Pancreas (tissue), 10 donors: ENCODE measurements at regions of chr17 and their contacts with region 1.

Region 1: DNA sequence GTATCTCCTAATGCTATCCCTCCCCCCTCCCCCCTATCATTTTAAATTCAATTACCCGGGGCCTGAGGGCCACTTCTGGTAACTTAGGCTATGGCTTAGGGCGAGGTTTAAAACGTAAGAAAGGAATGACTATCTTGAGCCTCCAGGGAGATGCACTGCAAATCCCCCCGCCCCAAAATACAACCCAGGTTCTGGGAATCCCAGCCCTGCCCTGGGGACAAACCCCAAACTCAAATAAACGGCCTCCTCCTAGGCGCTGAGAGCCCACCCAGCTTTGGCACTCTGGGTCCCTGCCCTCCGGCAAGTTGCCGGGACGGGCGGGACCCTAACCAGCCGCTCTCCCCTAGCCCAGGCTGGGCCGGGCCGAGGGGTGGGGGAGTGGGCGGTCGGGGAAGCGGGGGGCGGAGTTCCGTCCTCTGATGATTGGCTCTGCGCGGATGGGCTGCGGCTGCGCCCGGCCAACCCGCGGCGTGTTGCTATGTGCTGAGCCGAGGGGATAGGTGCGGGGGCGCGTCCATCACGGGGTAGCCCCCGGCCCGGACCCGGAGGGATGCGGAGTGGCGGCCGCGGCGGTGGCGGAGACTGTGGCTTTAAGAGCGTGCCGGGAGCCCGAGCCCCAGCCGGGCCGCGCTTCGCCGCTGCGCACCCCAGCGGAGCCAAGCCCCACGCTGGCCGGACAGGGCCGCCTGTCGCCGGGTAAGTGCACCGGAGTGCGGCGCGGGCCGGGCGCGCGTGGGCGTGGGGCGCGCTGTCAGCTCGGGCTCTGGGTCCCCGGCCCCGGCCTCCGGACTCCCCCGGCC is at the start of gene YPEL2:
- DNase-seq: peak; percentile 96 to 98 (median 97)
- ATAC-seq: peak; percentile 82 to 89 (median 88)
- H3K4me3 ChIP-seq: peak within 1 kb of the TSS; percentile 80 to 98 (median 96)
- H3K27ac ChIP-seq: peak within 1 kb of the TSS; percentile 79 to 96 (median 92)
- H3K4me1 ChIP-seq: peaks cover 22 to 45% (median 27%) of the 10 kb centered on the region in 3 donors
- H3K27me3 ChIP-seq: no peaks in the 10 kb centered on the region
- CTCF ChIP-seq: no peak
- total RNA-seq, gene YPEL2: 9.1 to 28.7 (median 13.6) TPM

Region 2: DNA sequence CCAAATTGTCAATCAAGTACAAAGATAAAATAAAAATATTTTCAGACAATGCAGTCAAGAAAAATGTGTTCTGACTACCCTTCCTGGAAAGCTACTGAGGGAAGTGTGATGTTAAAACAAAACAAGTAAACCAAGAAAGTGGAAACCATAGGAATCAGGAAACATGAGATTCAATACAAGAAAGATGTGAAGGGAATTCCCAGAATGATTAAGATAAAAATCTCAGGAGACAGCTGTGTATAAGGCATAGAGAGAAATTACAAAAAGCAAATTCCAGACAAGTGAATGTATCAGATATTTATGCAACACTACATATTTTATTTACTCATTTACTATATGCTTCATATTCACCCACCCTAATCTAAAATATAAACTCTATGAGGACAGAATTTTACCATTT is 256.8 kb before region 1 on chr17:
- intact Hi-C with region 1: no loop called
- DNase-seq: no peak
- ATAC-seq: no peak
- H3K4me3 ChIP-seq: no peak overlapping the region
- H3K27ac ChIP-seq: no peak overlapping the region
- H3K4me1 ChIP-seq: no peaks in the 10 kb centered on the region
- H3K27me3 ChIP-seq: no peaks in the 10 kb centered on the region
- CTCF ChIP-seq: no peak

Region 3: DNA sequence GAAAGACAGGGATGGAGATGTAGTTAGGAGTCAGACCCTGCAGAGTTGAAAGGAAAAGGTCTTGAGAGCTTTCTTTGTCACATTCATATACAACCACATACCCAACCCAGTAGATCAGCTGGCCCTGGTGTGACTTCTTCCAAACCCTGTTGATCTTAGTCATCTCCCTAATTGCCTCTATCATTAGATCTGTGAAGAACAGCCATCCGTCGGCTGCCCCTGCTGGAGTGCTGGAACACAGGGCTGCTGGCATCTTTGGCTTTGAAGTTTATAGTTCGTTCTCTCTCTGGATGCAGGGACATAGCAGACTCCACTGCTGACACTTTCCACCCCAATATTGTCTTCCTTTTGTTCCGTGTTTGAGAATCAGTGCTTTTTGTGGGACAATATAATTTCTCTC is 131.9 kb before region 1 on chr17:
- intact Hi-C with region 1: no loop called
- DNase-seq: no peak
- ATAC-seq: no peak
- H3K4me3 ChIP-seq: no peak overlapping the region
- H3K27ac ChIP-seq: no peak overlapping the region
- H3K4me1 ChIP-seq: no peaks in the 10 kb centered on the region
- H3K27me3 ChIP-seq: no peaks in the 10 kb centered on the region
- CTCF ChIP-seq: no peak

Region 4: DNA sequence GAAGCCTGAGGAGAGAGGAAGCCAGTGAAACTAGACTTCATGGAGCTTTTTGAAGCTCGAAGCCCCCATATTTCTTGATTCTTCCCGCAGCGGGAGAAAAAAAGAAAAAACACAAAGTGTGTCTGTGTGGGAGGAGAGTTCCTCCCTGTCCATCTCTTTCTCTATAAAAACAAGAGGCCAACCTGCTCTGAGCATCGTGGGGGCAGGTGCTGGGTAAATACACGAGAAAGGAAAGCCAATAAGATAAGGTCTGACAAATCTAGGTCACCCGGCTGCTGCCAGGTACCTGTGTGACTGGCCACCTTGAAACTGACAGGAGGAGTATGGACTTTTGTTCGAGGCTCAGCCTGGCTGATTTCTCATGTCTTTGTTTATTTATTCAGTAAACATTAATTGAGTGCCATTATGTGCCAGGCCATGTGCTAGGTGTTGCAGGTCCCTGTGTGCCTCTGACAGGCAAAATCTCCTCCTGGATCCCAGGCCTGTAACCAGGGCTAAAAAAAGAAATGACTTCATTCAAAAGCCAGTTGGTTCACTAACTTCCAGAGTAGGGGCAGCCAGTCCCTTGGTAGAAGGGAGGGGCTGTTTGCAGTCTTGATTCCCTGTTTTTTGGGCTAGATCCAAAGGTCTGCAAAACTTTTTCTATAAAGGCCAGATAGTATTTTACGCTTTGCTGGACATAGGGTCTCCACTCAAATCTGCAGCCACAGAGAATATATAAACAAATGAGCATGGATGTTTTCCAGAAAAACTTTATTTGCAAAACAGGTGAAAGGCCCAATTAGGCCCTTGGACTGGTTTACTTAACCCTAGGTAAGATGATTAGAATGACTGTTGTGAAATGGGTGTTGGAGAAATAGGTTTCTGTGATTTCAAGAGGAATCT is 35.7 kb after region 1 on chr17:
- intact Hi-C with region 1: loop called in 1 of 3 experiments (anchors 5 kb)
- DNase-seq: peak; percentile 69 to 94 (median 90)
- ATAC-seq: peak; percentile 84 to 90 (median 87)
- H3K4me3 ChIP-seq: peak overlapping the region in 1 of 4 donors; percentile 5
- H3K27ac ChIP-seq: peak overlapping the region; percentile 65 to 83 (median 76)
- H3K4me1 ChIP-seq: peaks cover 73 to 87% (median 80%) of the 10 kb centered on the region in 3 donors
- H3K27me3 ChIP-seq: no peaks in the 10 kb centered on the region
- CTCF ChIP-seq: no peak